ENCODE measurements at regions of chr9 and their contacts with region 1.

Region 1: GRCh38 chr9:114207034-114207810 is 51.9 kb downstream of the COL27A1 start:
- DNase-seq: peak; percentile 77 to 89
- ATAC-seq: peak; percentile 69
- H3K4me3 ChIP-seq: no peak overlapping the region
- H3K27ac ChIP-seq: peak overlapping the region in 1 of 2 donors; percentile 39
- H3K4me1 ChIP-seq: peaks cover 4 to 5% of the 10 kb centered on the region in 2 donors
- H3K27me3 ChIP-seq: no peaks in the 10 kb centered on the region

Region 2: GRCh38 chr9:113798062-113799030 is 408.9 kb before region 1 on chr9:
- intact Hi-C with region 1: no loop called
- DNase-seq: no peak
- ATAC-seq: no peak
- H3K4me3 ChIP-seq: no peak overlapping the region
- H3K27ac ChIP-seq: no peak overlapping the region
- H3K4me1 ChIP-seq: no peaks in the 10 kb centered on the region
- H3K27me3 ChIP-seq: no peaks in the 10 kb centered on the region

Region 3: DNA sequence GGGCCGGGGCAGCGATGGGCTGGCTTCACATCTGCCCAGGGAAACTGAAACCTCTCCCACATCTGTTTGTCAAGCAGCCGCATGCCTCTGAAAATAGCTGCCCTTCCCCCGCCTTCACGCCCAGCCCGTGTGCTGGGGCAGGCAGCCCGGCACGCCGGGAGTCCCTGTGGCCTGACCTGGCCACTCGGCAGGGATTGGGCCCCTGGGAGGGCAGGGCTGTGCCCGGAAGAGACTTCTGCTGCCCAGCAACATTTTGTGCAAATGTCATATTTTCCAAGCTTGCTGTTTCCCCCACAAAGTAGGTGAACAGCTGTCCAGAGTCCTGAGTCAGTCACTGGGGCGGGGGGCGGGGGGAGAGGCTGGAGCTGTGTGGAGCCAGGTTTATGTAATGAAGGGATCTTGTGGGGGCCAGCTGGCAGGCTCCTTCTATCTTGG is 43.7 kb before region 1 on chr9:
- intact Hi-C with region 1: loop called in 1 of 2 experiments (anchors 5 kb)
- DNase-seq: peak; percentile 81 to 92
- ATAC-seq: peak; percentile 82
- H3K4me3 ChIP-seq: no peak overlapping the region
- H3K27ac ChIP-seq: peak overlapping the region; percentile 39 to 57
- H3K4me1 ChIP-seq: no peaks in the 10 kb centered on the region
- H3K27me3 ChIP-seq: no peaks in the 10 kb centered on the region

Region 4: DNA sequence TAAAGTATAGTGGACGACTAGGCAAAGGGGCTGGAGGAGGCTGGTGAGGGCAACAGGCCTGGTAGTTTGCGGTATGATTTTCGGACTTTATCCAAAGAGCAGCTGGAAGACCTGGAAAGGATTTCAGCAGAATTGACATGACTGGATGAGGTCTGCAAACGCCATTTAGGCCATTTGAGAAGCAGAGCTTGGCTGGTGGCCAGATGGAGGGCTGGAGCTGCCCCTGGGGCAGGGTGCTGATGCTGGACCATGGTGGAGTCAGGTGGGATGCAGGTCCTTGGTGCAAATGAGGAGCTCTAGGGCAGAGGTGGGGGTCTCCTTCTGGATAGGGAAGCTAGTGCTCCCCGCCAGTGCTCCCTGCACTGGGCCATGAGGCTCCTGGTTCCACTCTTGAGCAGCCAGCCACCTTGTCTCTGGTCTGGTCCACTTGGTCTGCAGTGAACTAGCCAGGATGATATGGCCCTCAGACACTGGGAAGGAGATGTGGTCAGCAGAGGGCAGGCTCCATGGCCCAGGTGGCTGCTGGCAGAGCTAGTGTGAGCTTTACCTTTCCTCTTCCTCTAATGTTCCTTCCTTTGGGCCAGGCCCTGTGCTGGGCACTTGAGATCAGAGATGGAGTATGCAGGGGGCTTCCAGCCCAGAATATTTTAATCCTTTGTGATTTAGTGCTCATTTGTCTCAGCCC is 20.5 kb before region 1 on chr9:
- intact Hi-C with region 1: no loop called
- DNase-seq: peak in 1 of 2 donors; percentile 72
- ATAC-seq: peak; percentile 38
- H3K4me3 ChIP-seq: no peak overlapping the region
- H3K27ac ChIP-seq: no peak overlapping the region
- H3K4me1 ChIP-seq: no peaks in the 10 kb centered on the region
- H3K27me3 ChIP-seq: no peaks in the 10 kb centered on the region

Region 5: DNA sequence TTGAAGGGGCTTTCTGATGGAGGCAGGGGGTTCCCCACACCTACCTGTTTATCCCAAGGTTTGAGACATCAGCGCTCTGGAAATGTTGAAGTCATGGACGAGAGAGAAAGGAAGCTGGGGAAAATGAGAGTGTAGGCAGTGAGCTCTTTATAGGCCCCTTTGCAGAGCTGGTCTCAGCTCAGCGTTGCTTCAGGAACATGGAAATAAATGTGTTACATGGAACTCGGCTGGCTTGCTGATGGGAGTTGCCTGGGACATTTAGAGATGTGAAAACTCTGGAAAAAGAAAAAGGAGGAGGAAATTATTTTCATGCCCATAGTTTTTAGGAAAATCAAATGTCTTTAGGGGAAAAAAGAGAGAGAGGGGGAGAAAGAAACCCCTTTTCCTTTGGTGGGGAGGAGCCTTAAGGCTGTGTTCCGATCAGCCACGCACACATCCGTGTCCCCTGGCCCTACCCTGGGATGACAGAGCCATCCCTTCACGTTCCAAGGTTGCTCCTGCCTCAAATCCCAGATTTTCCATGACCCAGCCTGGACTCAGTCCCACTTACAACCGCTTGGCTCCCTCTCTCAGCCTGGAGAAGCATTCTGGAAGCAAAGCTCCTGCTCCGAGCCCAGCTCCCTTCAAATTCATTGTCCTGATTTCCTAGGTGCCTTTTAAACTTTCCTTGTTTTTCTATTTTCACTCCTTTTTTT is 26.4 kb after region 1 on chr9:
- intact Hi-C with region 1: loop called in 1 of 2 experiments (anchors 1 kb)
- DNase-seq: peak in 1 of 2 donors; percentile 77
- ATAC-seq: peak; percentile 76
- H3K4me3 ChIP-seq: no peak overlapping the region
- H3K27ac ChIP-seq: peak overlapping the region; percentile 28 to 62
- H3K4me1 ChIP-seq: peaks cover 0 to 5% of the 10 kb centered on the region in 2 donors
- H3K27me3 ChIP-seq: no peaks in the 10 kb centered on the region

Region 6: GRCh38 chr9:114299286-114300152 is 92.3 kb after region 1 on chr9:
- intact Hi-C with region 1: no loop called
- DNase-seq: peak in 1 of 2 donors; percentile 54
- ATAC-seq: no peak
- H3K4me3 ChIP-seq: no peak overlapping the region
- H3K27ac ChIP-seq: no peak overlapping the region
- H3K4me1 ChIP-seq: no peaks in the 10 kb centered on the region
- H3K27me3 ChIP-seq: no peaks in the 10 kb centered on the region